ENCODE measurements at regions of chr1 and their contacts with region 1.

Region 1: DNA sequence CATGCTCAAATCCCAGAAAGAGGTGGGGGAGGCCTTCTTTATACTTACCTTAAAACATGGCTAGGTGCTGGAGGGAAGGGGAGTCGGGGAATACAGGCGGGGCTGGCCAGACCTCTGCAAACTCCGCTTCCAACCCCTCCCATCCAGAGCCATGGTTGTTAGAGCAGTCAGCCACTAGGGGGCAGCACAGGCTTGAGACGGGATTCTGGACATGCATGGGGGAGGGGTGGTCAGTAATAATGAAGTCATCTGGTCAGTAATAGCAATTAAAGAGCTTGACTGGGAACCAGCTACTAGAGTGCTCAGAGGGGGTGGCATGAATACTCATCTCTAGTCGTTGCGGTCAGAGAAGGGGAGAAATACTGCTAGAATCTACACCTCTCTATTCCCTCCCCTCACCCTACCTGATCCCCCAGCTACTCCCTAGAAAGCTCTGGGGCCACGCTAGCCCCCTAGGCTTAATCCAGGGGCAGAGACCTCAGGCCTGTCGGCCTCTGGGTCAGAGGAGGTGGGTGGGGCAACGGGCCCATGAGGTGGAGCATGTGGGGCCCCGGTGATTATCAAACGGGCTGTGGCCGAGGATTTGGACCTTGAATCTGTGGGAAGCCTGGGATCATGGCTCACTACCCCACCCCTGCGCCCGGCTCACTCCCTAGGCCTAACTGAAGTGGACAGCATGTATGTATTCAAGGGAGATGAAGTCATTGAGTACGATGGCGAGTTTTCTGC is 2.9 kb downstream of the CASQ1 start:
- DNase-seq: peak; percentile 65
- H3K4me3 ChIP-seq: no peak overlapping the region
- H3K27ac ChIP-seq: no peak overlapping the region
- H3K4me1 ChIP-seq: peaks cover 3% of the 10 kb centered on the region
- H3K27me3 ChIP-seq: peaks cover 2% of the 10 kb centered on the region
- CTCF ChIP-seq: peak; percentile 97

Region 2: GRCh38 chr1:160137216-160137862 is 55.9 kb before region 1 on chr1:
- CTCF ChIA-PET with region 1: no interaction called
- dilution Hi-C with region 1: loop called (anchors 5 kb)
- in situ Hi-C with region 1: no loop called
- intact Hi-C with region 1: no loop called
- DNase-seq: no peak
- H3K4me3 ChIP-seq: no peak overlapping the region
- H3K27ac ChIP-seq: no peak overlapping the region
- H3K4me1 ChIP-seq: no peaks in the 10 kb centered on the region
- H3K27me3 ChIP-seq: no peaks in the 10 kb centered on the region
- CTCF ChIP-seq: no peak

Region 3: DNA sequence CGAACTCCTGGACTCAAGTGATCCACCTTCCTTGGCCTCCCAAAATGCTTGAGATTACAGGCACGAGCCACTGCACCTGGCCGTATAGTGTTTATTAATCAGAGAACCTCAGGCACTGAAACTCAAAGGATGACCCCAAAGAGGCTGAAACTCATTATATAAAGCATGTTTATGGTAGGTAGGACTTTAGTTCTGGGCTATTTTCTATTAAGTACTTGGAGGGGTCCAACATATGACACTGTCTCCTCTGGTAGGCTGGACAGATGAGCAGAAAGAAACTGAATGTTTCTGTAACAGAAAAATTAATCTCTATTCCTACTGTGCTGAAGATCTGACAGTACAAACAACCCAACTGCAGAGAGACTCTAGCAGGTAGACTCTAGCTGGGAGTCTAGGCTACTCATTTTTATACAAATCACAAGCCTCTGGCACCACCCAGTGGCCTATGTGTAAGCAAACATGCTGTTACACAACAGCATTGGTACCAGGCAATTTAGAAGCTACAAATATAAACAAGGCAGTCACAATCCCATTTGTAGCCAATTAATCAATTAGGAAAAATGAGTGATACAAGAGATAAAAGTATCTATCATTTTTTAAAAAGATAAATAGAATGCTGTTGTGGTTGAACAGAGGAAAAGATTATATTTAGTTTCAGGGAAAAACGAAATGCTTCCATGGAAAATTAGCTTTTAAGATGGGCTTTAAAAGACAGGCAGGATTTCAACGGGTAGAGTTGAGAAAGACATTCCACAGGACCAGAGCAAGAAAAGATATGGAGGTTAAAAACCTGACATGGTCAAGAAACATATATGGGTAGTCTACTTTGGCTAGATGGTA is 58.7 kb after region 1 on chr1:
- CTCF ChIA-PET with region 1: interaction called, 41 read pairs
- dilution Hi-C with region 1: no loop called
- in situ Hi-C with region 1: loop called in 1 of 2 experiments (anchors 10 kb)
- intact Hi-C with region 1: loop called (anchors 1 kb)
- DNase-seq: peak; percentile 50
- H3K4me3 ChIP-seq: no peak overlapping the region
- H3K27ac ChIP-seq: no peak overlapping the region
- H3K4me1 ChIP-seq: peaks cover 8% of the 10 kb centered on the region
- H3K27me3 ChIP-seq: no peaks in the 10 kb centered on the region
- CTCF ChIP-seq: peak; percentile 81 to 83

Region 4: DNA sequence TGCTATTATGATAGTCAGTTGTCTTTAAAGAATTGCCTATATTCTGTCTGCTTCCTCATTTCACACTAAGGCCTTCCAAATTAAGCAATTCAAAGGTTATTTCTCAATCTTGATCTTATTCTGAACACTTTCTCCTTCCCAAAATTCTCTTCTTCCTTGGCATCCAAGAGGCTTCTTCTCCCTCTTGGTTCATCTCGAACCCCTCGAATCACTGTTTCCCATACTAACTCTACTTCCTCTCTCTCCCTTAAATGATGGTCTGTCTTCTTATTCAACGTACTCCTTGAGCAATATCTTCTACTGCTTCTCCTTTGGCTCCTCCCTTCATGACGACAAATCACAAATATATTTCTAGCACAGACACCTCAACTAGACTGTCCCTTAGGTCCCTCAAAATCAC is 145.3 kb after region 1 on chr1:
- CTCF ChIA-PET with region 1: no interaction called
- dilution Hi-C with region 1: no loop called
- in situ Hi-C with region 1: no loop called
- intact Hi-C with region 1: no loop called
- DNase-seq: no peak
- H3K4me3 ChIP-seq: no peak overlapping the region
- H3K27ac ChIP-seq: no peak overlapping the region
- H3K4me1 ChIP-seq: peaks cover 4% of the 10 kb centered on the region
- H3K27me3 ChIP-seq: no peaks in the 10 kb centered on the region
- CTCF ChIP-seq: no peak

Region 5: GRCh38 chr1:160376525-160377131 is 183.4 kb after region 1 on chr1:
- CTCF ChIA-PET with region 1: interaction called, 5 read pairs
- dilution Hi-C with region 1: no loop called
- in situ Hi-C with region 1: no loop called
- intact Hi-C with region 1: loop called (anchors 1 kb)
- DNase-seq: peak; percentile 46
- H3K4me3 ChIP-seq: no peak overlapping the region
- H3K27ac ChIP-seq: no peak overlapping the region
- H3K4me1 ChIP-seq: peaks cover 3% of the 10 kb centered on the region
- H3K27me3 ChIP-seq: no peaks in the 10 kb centered on the region
- CTCF ChIP-seq: peak; percentile 96 to 97

Region 6: DNA sequence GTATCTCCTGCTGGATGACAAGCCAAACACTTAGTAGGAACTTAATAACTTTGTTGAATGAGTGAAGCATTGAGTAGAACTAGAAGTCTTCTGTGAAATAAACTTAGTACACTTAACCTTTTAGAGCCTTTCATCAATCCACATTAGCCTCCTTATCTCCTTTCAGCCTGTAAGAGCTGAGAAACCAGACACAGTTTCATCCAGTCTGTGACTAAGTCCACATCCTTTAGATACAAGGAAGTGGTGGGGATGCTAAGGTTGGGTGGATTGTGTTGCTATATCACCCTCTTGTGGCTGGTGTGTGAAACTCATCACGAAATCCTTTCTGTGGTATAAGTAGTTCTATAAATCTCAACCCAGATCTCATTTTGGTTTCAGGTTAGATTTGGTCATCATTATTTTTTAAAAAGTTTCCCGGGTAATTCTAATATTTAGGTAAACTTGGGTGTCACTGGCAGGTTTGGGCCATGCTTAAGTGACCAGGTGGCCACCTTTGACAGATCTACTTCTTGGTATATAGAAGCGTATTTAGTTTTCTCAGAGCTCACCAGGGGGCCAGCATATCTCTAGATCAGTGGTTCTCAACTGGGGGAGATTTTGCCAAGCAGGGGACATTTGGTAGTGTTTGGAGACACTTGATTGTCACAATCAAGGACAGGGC is 413.9 kb after region 1 on chr1:
- CTCF ChIA-PET with region 1: no interaction called
- dilution Hi-C with region 1: no loop called
- in situ Hi-C with region 1: loop called in 1 of 2 experiments (anchors 25 kb)
- intact Hi-C with region 1: loop called (anchors 5 kb)
- DNase-seq: peak; percentile 70
- H3K4me3 ChIP-seq: no peak overlapping the region
- H3K27ac ChIP-seq: no peak overlapping the region
- H3K4me1 ChIP-seq: no peaks in the 10 kb centered on the region
- H3K27me3 ChIP-seq: peaks cover 2% of the 10 kb centered on the region
- CTCF ChIP-seq: peak; percentile 78 to 79

Region 7: DNA sequence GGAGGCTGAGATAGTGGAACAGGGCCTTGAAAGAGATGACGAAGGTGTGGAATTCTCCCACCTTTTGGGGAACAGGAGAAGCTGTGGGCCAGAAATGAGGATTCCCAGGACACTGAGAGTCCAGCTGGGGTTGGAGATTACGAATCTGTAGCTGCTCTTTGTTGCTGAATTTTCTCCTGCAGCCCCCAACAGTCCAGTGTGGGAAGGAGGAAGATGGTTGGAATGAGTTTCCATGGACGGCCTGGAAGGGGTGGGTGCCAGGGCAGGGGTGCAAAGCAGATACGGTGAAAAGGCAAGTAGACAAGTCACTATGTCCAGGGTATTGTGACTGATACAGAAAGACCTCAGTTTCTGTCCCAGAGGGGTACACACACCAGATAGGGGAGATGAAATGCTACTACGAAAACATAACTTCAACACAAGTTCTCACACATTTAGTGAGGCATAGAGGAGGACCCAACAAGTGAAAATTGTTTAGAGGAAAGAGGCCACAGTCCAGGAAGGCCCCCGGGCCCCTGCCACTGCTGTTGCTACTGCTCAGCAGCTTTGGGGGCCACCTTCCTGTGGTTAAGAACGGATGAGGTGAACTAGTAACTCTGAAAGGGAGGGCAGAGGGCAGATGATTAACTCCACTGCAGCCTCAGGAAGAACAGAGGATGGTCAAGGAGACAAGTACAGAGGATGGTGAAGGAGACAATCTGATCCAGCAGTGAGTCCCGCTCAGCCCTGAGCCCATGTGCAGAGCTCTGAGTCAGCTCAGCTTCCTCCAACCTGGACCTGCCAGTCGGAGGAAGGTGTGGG is 662.1 kb after region 1 on chr1:
- CTCF ChIA-PET with region 1: no interaction called
- dilution Hi-C with region 1: no loop called
- in situ Hi-C with region 1: no loop called
- intact Hi-C with region 1: no loop called
- DNase-seq: no peak
- H3K4me3 ChIP-seq: no peak overlapping the region
- H3K27ac ChIP-seq: no peak overlapping the region
- H3K4me1 ChIP-seq: no peaks in the 10 kb centered on the region
- H3K27me3 ChIP-seq: no peaks in the 10 kb centered on the region
- CTCF ChIP-seq: no peak

Measured in mammary epithelial cell (primary cell).